ENCODE measurements at regions of chrX and their contacts with region 1.

Region 1: GRCh38 chrX:130994671-130995070 is 63.5 kb upstream of the ARHGAP36 start:
- DNase-seq: peak; percentile 49
- ATAC-seq: no peak
- H3K4me3 Mint-ChIP-seq: no peak overlapping the region
- H3K27ac Mint-ChIP-seq: no peak overlapping the region
- H3K4me1 Mint-ChIP-seq: no peaks in the 10 kb centered on the region
- H3K27me3 Mint-ChIP-seq: no peaks in the 10 kb centered on the region

Region 2: DNA sequence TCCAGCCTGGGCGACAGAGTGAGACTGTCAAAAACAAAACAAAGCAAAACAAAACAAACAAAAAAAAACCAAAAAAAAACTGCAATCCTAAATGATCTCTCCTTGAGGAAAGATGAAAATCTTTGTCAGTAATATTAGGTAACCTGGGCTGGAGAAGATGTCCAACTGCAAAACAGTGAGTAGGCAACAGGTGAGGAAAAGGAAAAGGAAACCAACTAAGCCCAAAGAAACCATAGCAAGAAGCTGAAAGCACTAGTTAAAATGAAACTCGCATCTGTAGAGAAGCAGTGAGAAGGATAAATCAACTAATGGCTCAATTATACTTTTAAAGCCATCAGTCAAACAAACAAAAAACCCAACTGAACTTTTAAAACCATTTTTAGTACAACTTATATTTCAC is 145.9 kb before region 1 on chrX:
- CTCF ChIA-PET with region 1: no interaction called
- POLR2A ChIA-PET with region 1: no interaction called
- intact Hi-C with region 1: no loop called
- DNase-seq: no peak
- ATAC-seq: no peak
- H3K4me3 Mint-ChIP-seq: no peak overlapping the region
- H3K27ac Mint-ChIP-seq: peak overlapping the region; percentile 38
- H3K4me1 Mint-ChIP-seq: peaks cover 13% of the 10 kb centered on the region
- H3K27me3 Mint-ChIP-seq: no peaks in the 10 kb centered on the region

Region 3: DNA sequence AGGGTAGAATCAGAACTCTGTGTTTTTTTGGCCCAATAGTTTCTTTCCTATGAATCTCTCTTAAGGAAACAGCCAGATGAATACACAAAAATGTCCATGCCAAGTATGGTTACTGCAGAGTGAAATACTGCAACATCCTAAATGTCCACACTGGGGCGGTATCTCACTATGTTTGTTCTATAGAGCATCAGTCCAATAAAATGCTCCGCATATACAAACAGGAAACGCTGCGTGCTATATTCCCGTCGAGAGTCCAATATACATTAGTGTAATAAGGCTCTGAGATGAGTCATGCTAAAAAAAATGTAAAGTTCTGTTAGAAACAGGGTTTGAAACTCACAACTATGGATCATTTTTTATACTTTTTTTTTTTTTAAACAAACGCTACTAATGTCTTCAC is 18.7 kb before region 1 on chrX:
- CTCF ChIA-PET with region 1: no interaction called
- POLR2A ChIA-PET with region 1: no interaction called
- intact Hi-C with region 1: no loop called
- DNase-seq: peak; percentile 55
- ATAC-seq: peak; percentile 73
- H3K4me3 Mint-ChIP-seq: no peak overlapping the region
- H3K27ac Mint-ChIP-seq: no peak overlapping the region
- H3K4me1 Mint-ChIP-seq: no peaks in the 10 kb centered on the region
- H3K27me3 Mint-ChIP-seq: no peaks in the 10 kb centered on the region

Region 4: GRCh38 chrX:131308980-131309379 is 314.3 kb after region 1 on chrX:
- CTCF ChIA-PET with region 1: no interaction called
- POLR2A ChIA-PET with region 1: no interaction called
- intact Hi-C with region 1: no loop called
- DNase-seq: no peak
- ATAC-seq: no peak
- H3K4me3 Mint-ChIP-seq: no peak overlapping the region
- H3K27ac Mint-ChIP-seq: no peak overlapping the region
- H3K4me1 Mint-ChIP-seq: no peaks in the 10 kb centered on the region
- H3K27me3 Mint-ChIP-seq: no peaks in the 10 kb centered on the region

Region 5: DNA sequence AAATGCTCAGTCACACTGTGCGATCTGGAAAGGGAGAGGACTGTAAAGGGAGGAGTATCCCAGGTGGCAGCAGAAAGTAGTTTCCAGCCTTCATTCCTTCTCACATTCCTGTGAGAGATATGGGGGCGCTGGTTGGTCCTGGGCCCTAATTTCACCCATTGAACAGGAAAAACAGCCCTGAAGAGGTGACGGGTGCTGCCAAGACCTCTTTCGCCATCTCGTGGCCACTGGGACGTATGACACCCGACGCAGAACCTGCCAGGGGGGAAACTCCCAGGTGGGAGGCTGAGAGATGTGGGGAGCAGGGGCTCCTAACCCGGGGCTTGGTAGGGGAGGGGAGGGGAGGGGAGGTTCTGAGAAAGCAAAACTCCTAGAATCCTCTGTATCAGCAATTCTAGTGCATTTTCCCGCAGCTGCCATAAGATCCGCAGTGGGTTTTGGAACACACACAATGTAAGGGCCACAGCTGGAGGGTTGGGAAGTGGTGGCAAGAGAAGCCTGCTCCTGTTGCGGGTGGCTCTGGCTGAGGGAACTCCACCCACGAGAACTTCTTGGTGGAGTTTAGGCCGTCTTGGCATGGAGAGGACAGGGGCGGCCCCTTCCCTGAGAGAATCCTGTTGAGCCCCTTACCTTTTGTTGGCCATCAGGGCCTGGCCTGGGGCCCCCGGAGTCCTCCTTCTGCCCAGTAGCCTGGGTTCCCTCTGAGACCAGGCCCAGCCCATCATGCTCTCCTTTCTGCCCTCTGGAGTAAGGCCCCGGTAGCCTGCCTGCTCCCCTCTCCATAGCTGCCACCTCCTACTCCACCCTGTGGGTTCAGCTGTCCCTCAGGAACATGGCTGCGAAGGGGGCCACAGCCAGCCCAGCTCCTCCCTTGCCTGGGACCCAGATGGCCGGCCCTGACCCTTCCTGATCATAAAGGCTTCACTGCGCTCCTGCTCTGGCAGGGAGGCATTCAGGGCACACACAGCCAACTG is 683.3 kb after region 1 on chrX:
- CTCF ChIA-PET with region 1: interaction called, 3 read pairs
- POLR2A ChIA-PET with region 1: no interaction called
- intact Hi-C with region 1: loop called in 1 of 2 experiments (anchors 5 kb)
- DNase-seq: peak; percentile 65
- ATAC-seq: peak; percentile 44
- H3K4me3 Mint-ChIP-seq: no peak overlapping the region
- H3K27ac Mint-ChIP-seq: no peak overlapping the region
- H3K4me1 Mint-ChIP-seq: no peaks in the 10 kb centered on the region
- H3K27me3 Mint-ChIP-seq: no peaks in the 10 kb centered on the region

Region 6: GRCh38 chrX:131802835-131803626 is 808.4 kb after region 1 on chrX:
- CTCF ChIA-PET with region 1: no interaction called
- POLR2A ChIA-PET with region 1: no interaction called
- intact Hi-C with region 1: loop called in 1 of 2 experiments (anchors 10 kb)
- DNase-seq: peak; percentile 51
- ATAC-seq: peak; percentile 39
- H3K4me3 Mint-ChIP-seq: no peak overlapping the region
- H3K27ac Mint-ChIP-seq: no peak overlapping the region
- H3K4me1 Mint-ChIP-seq: no peaks in the 10 kb centered on the region
- H3K27me3 Mint-ChIP-seq: no peaks in the 10 kb centered on the region

Measured in activated CD4-positive, alpha-beta T cell treated with anti-CD3 and anti-CD28 coated beads for 36 hours (primary cell).